Esophagus squamous epithelium (tissue), 5 donors: ENCODE measurements at regions of chr13 and their contacts with region 1.

Region 1: DNA sequence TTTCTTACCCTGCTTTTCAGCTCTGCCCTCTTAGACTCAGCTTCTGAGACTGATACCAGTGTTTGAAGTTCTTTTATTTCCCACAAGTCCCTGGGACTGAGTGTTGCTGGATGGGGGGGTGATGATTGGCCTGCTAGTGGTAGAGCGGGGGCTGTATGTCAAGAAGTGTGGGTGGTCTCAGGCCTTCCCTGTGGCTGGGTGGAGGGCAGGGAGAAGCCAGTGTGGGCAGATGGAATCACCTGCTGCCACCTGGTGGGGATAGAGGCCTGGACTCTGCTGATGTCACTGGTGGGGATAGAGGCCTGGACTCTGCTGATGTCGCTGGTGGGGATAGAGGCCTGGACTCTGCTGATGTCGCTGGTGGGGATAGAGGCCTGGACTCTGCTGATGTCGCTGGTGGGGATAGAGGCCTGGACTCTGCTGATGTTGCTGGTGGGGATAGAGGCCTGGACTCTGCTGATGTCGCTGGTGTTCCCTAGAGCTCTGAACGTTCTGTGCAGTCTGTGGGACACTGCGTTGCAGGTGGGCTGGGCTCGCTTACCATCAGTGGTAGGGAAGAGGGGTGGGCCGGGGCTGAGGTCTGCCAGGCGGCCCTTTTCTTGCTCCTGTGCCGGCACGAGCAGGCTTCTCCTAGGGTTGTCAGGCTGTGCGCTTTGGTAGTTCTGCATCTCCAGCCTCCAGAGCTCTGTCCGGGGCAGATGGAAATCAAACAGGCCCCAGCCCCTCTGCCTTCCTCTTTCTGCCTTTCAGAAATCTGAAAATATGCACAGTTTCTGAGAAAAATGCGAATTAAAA is 101.3 kb downstream of the ARHGEF7 start:
- DNase-seq: no peak
- H3K4me3 ChIP-seq: no peak overlapping the region
- H3K27ac ChIP-seq: peak overlapping the region in 2 of 4 donors; percentile 23 to 34
- H3K4me1 ChIP-seq: peaks cover 4 to 78% (median 6%) of the 10 kb centered on the region in 3 donors
- H3K27me3 ChIP-seq: no peaks in the 10 kb centered on the region
- CTCF ChIP-seq: peak in 5 of 6 experiments; percentile 14 to 50 (median 38)
- POLR2A ChIP-seq: no peak

Region 2: GRCh38 chr13:111066544-111066943 is 149.8 kb before region 1 on chr13:
- intact Hi-C with region 1: loop called (anchors 10 kb)
- DNase-seq: no peak
- H3K4me3 ChIP-seq: peak overlapping the region in 1 of 4 donors; percentile 56
- H3K27ac ChIP-seq: no peak overlapping the region
- H3K4me1 ChIP-seq: peaks cover 0 to 15% (median 0%) of the 10 kb centered on the region in 3 donors
- H3K27me3 ChIP-seq: peaks cover 0 to 21% (median 0%) of the 10 kb centered on the region in 4 donors
- CTCF ChIP-seq: no peak
- POLR2A ChIP-seq: no peak